Panc1 (cell line): ENCODE measurements at regions of chr1 and their contacts with region 1.

Region 1: DNA sequence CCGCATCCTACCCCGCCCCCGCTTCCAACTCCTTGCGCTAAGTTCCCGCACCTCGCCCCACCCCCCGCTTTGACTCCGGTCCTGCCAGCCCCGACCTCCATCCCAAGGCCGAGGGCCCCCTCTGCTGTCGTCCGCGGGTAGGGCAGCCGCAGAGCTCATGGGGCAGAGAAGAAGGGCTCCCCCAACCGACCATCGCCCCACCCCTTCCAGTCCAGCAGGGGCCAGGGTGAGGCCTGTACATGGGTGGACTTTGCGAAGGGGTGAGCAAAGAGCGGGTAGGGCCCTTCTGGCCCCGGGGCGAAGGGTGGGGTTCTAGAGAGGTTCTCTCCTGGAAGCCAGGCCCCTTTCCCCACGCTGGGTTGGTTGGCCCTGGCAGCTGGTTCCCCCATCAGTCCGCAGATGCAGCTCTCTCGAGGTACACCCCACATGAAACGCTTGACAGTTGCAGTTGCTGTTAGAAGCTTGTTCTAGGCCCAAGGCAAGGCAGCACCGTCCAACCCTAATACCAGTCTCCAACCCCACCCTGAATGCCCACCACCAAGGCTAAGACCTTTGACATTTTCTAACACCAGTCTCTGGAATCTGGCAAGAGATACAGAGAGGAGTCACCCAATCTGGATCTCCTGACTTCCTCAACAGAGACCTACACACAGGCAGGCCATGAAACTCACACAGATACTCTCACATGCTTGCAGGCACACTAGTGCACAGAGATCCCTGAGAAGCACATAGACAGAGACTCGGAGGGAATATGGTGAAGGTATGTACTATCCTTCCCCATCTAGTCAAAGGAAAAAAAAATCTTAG is 25.3 kb upstream of the ADGRB2 start:
- DNase-seq: peak; percentile 50
- ATAC-seq: peak; percentile 87
- H3K4me3 ChIP-seq: peak overlapping the region; percentile 53 to 88
- H3K27ac ChIP-seq: peak overlapping the region; percentile 18; the same call in 1 of the 2 replicates
- H3K4me1 ChIP-seq: 0 out of 2 replicates have a peak, but pooled peaks cover 14% of the 10 kb centered on the region
- H3K27me3 ChIP-seq: no peaks in the 10 kb centered on the region
- CTCF ChIP-seq: peak; percentile 97

Region 2: GRCh38 chr1:31460027-31460426 is 329.4 kb before region 1 on chr1:
- CTCF ChIA-PET with region 1: no interaction called
- POLR2A ChIA-PET with region 1: no interaction called
- in situ Hi-C with region 1: no loop called
- intact Hi-C with region 1: no loop called
- DNase-seq: no peak
- ATAC-seq: no peak
- H3K4me3 ChIP-seq: no peak overlapping the region
- H3K27ac ChIP-seq: no peak overlapping the region
- H3K4me1 ChIP-seq: no peaks in the 10 kb centered on the region
- H3K27me3 ChIP-seq: peaks cover 9% of the 10 kb centered on the region
- CTCF ChIP-seq: peak; percentile 16; the same call in 1 of the 2 replicates

Region 3: DNA sequence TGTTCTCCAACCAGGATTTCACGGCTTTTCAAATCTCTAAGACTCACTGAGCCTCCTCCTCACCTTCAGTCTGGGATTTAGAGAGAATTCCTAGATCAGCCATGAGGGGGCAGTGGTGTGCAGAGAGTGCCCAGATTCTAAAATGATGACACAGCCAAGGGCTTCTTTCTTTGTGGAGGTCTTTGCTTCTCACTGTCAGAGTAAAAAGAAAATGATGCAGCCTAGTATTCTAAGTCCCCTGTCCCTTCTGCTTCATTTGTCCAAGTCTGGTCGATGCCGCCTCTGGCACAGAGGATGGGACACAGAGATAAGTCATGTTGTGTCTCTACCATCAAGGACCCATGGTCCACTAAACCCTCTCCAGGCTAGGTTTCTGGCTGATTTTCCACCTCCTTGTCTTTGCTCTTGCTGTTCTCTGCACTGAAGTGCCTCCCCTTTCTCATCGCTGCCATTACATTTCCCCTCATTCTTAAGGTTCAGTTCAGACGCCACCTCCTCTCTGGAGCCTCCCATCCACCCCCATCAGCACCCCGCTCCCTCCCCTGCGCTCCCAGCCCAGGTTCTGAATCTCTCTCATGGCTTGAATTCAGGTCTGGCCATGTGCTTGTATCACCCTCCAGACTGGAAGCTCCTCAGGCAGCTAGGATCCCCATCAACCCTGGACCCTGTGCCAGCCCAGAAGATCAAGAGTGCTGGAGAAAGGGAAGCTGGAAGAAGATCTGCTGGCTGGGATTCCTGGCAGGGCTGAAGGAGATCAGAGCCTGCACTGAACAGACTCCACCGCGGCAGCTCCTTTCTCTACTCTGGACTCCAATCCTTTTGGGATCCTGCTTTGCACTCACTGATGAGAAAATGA is 225.1 kb before region 1 on chr1:
- CTCF ChIA-PET with region 1: no interaction called
- POLR2A ChIA-PET with region 1: no interaction called
- in situ Hi-C with region 1: no loop called
- intact Hi-C with region 1: loop called (anchors 10 kb)
- DNase-seq: no peak
- ATAC-seq: peak; percentile 81
- H3K4me3 ChIP-seq: no peak overlapping the region
- H3K27ac ChIP-seq: peak overlapping the region; percentile 11; the same call in 1 of the 2 replicates
- H3K4me1 ChIP-seq: no peaks in the 10 kb centered on the region; the same call in 1 of the 2 replicates
- H3K27me3 ChIP-seq: no peaks in the 10 kb centered on the region
- CTCF ChIP-seq: peak; percentile 90

Region 4: DNA sequence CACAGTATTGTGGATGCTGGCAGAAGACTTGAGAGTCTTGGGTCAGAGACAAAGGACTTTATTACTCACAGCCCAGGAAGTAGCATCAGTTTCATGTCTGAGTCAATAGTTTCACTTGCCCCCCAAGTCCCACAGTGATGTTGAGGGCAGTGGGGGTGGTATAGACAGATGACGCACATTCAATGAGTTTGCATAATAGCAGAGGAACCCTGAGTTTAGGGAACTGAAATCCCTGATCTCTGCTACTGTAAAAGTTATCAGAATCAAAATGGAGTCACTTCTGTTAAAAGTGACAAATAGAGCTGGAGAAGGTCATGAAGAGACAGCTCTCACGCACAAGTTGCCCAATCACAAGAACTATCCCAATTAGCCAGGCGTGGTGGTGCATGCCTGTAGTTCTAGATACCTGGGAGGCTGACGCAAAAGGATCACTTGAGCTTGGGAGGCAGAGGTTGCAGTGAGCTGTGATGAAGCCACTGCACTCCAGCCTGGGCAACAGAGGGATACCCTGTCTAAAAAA is 183.5 kb before region 1 on chr1:
- CTCF ChIA-PET with region 1: no interaction called
- POLR2A ChIA-PET with region 1: no interaction called
- in situ Hi-C with region 1: no loop called
- intact Hi-C with region 1: no loop called
- DNase-seq: no peak
- ATAC-seq: no peak
- H3K4me3 ChIP-seq: no peak overlapping the region
- H3K27ac ChIP-seq: no peak overlapping the region
- H3K4me1 ChIP-seq: no peaks in the 10 kb centered on the region
- H3K27me3 ChIP-seq: no peaks in the 10 kb centered on the region; the same call in 1 of the 2 replicates
- CTCF ChIP-seq: no peak

Region 5: GRCh38 chr1:31644560-31645273 is 144.7 kb before region 1 on chr1 and contains the start of gene PEF1:
- CTCF ChIA-PET with region 1: interaction called, 13 read pairs
- POLR2A ChIA-PET with region 1: interaction called, 11 read pairs
- in situ Hi-C with region 1: no loop called
- intact Hi-C with region 1: no loop called
- DNase-seq: peak; percentile 92
- ATAC-seq: peak; percentile 97
- H3K4me3 ChIP-seq: peak within 1 kb of the TSS; percentile 88 to 97
- H3K27ac ChIP-seq: peak within 1 kb of the TSS; percentile 96
- H3K4me1 ChIP-seq: peaks cover 19% of the 10 kb centered on the region
- H3K27me3 ChIP-seq: no peaks in the 10 kb centered on the region
- CTCF ChIP-seq: no peak
- total RNA-seq, gene PEF1: 58.4 TPM

Region 6: GRCh38 chr1:31705080-31705866 is 84.2 kb before region 1 on chr1:
- CTCF ChIA-PET with region 1: interaction called, 10 read pairs
- POLR2A ChIA-PET with region 1: no interaction called
- in situ Hi-C with region 1: no loop called
- intact Hi-C with region 1: no loop called
- DNase-seq: no peak
- ATAC-seq: peak; percentile 50
- H3K4me3 ChIP-seq: 0 out of 4 replicates have a peak overlapping the region, but pooled peaks of 1 of the 2 experiments have one; percentile 2
- H3K27ac ChIP-seq: peak overlapping the region; percentile 74
- H3K4me1 ChIP-seq: peaks cover 43% of the 10 kb centered on the region
- H3K27me3 ChIP-seq: no peaks in the 10 kb centered on the region
- CTCF ChIP-seq: no peak

Region 7: DNA sequence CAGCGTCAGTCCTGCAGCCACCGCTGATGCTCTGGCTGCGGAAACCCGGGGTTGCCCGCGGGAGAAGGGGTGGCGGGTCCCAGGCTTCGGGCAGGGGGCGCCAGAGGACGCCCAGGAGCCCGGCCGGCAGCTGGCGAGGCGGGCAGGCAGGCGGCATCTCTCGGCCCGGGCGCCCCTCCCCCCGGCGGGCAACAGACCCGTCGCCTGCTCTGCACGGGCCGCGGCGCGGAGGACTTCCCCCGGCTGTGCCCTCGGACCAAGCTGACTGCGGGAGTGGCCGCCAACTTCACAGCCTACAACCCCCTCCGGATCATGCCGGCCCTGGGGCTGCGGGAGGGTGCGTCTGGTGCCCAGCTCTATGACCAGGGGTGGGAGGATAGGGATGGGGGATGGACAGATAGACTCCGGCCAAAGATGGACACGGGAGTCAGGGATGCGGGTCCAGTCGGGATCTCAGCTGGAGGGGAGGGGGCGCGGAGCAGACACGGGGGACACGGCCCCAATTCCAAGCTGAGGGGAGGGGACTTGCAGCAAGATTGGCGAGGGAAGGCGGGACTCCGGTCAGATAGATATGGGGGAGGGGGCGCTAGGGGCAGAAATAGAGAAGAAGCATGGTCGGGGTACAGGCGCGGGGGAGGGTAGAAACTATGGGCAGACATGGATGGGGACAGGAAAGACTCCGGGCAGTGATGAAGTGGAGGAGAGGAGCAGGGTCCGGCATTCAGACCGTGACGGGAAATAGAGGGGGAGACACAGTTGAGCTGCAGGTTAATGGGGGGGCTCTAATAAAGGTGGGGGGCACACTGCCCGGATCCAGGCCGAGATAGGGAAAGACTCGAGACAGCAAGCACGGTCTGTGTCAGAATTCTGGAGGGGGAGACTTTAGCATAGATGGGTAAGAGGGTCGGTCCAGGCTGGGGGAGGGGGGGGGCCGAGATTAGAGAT is 26.5 kb before region 1 on chr1:
- CTCF ChIA-PET with region 1: interaction called, 14 read pairs
- POLR2A ChIA-PET with region 1: interaction called, 21 read pairs
- in situ Hi-C with region 1: no loop called
- intact Hi-C with region 1: no loop called
- DNase-seq: no peak
- ATAC-seq: peak; percentile 70
- H3K4me3 ChIP-seq: peak overlapping the region; percentile 62 to 68
- H3K27ac ChIP-seq: peak overlapping the region; percentile 46
- H3K4me1 ChIP-seq: peaks cover 60% of the 10 kb centered on the region
- H3K27me3 ChIP-seq: no peaks in the 10 kb centered on the region
- CTCF ChIP-seq: peak; percentile 93

Region 8: GRCh38 chr1:32200226-32201010 is 411.0 kb after region 1 on chr1 and contains the start of gene CCDC28B:
- CTCF ChIA-PET with region 1: no interaction called
- POLR2A ChIA-PET with region 1: no interaction called
- in situ Hi-C with region 1: no loop called
- intact Hi-C with region 1: no loop called
- DNase-seq: no peak
- ATAC-seq: peak; percentile 52
- H3K4me3 ChIP-seq: peak within 1 kb of the TSS; percentile 60 to 71
- H3K27ac ChIP-seq: peak within 1 kb of the TSS; percentile 81
- H3K4me1 ChIP-seq: peaks cover 55% of the 10 kb centered on the region
- H3K27me3 ChIP-seq: no peaks in the 10 kb centered on the region
- CTCF ChIP-seq: no peak
- total RNA-seq, gene CCDC28B: 10.8 TPM